Activated CD4-positive, alpha-beta memory T cell treated with anti-CD3 and anti-CD28 coated beads, Interleukin-2, amount 10 ng/mL, durations not matched to agents 7 days and 5 days (primary cell): ENCODE measurements at regions of chr20 and their contacts with region 1.

Region 1: DNA sequence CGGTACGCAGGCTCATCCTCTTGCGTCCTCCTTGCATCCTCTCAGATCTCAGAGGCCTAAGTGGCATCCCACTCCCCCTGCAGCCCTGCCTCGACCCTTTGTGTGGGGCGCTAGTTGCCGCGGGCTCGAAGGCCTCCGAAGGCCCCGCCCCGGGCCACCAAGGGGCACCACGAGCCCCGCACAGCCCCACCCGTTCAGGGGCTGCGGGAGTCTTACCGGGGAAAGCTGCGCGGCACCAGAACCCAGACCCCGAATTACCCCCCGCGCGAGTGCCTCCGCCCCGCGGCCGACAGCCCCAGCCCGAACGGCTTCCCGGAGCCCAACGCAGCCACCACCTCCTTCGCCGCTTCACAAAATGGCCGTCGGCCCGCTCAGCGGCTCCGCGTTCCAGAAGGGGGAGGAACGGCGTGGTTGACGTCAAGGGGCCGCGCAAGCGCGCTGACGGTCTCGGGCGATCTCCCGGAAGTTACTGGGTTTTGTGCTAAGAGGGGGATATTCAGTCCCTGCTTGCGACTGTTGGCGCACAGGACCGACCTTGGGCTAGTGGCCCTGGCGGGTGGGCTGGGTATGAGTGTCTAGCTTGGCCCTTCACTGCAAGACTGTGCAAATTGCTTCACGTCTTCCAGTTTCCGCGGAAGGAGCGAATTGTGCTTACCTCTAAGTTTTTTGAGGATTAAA is at the starts of genes CPNE1 and RBM12:
- DNase-seq: peak; percentile 95
- H3K4me3 Mint-ChIP-seq: peak within 1 kb of the TSS; percentile 95
- H3K27ac Mint-ChIP-seq: peak within 1 kb of the TSS; percentile 98
- H3K4me1 Mint-ChIP-seq: peaks cover 46% of the 10 kb centered on the region
- H3K27me3 Mint-ChIP-seq: no peaks in the 10 kb centered on the region
- total RNA-seq, gene CPNE1: 239 to 243 TPM
- total RNA-seq, gene RBM12: 115 to 116 TPM

Region 2: GRCh38 chr20:35601008-35601973 is 63.4 kb before region 1 on chr20:
- CTCF ChIA-PET with region 1: interaction called, 4 read pairs
- POLR2A ChIA-PET with region 1: interaction called, 11 read pairs
- DNase-seq: peak; percentile 82
- H3K4me3 Mint-ChIP-seq: peak overlapping the region; percentile 60
- H3K27ac Mint-ChIP-seq: no peak overlapping the region
- H3K4me1 Mint-ChIP-seq: peaks cover 8% of the 10 kb centered on the region
- H3K27me3 Mint-ChIP-seq: peaks cover 57% of the 10 kb centered on the region

Region 3: DNA sequence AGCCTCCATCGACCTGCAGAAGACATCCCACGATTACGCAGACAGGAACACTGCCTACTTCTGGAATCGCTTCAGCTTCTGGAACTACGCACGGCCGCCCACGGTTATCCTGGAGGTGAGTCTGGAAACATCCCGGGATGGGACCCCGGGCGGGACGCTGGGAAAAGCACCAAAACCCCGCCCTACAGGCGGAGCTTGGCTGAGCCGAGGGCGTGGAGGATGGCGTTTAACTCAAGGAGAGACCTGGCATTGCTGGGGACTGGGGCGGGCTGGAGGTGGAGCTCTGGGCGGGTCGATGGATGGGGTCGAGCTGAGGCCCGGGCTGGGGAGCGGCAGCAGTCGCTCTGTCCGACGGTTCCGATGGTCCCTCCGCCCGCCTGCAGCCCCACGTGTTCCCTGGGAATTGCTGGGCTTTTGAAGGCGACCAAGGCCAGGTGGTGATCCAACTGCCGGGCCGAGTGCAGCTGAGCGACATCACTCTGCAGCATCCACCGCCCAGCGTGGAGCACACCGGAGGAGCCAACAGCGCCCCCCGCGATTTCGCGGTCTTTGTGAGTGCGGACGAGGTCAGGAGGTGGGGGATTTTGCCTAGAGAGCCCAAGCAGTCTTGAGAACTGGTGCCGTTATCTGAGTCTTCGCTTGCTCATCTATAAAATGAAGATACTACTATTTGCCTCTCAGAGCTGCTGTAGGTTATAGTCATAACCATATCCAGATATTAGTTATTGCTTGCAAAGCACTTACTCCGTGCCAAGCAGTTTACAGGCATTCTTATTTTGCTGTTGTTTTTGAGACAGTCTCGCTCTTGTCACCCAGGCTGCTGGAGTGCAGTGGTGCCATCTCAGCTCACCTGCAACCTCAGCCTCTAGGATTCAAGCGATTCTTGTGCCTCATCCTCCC is 45.2 kb before region 1 on chr20:
- CTCF ChIA-PET with region 1: interaction called, 9 read pairs
- POLR2A ChIA-PET with region 1: interaction called, 198 read pairs
- DNase-seq: peak; percentile 78
- H3K4me3 Mint-ChIP-seq: peak overlapping the region; percentile 83
- H3K27ac Mint-ChIP-seq: peak overlapping the region; percentile 70
- H3K4me1 Mint-ChIP-seq: peaks cover 45% of the 10 kb centered on the region
- H3K27me3 Mint-ChIP-seq: peaks cover 1% of the 10 kb centered on the region

Region 4: GRCh38 chr20:35648836-35649235 is 15.8 kb before region 1 on chr20:
- CTCF ChIA-PET with region 1: interaction called, 3 read pairs
- POLR2A ChIA-PET with region 1: interaction called, 21 read pairs
- DNase-seq: no peak
- H3K4me3 Mint-ChIP-seq: no peak overlapping the region
- H3K27ac Mint-ChIP-seq: no peak overlapping the region
- H3K4me1 Mint-ChIP-seq: peaks cover 38% of the 10 kb centered on the region
- H3K27me3 Mint-ChIP-seq: no peaks in the 10 kb centered on the region

Region 5: GRCh38 chr20:35699127-35699975 is 34.7 kb after region 1 on chr20 and contains the starts of genes NFS1 and ROMO1:
- CTCF ChIA-PET with region 1: interaction called, 3 read pairs
- POLR2A ChIA-PET with region 1: interaction called, 35 read pairs
- DNase-seq: peak; percentile 87
- H3K4me3 Mint-ChIP-seq: peak within 1 kb of the TSS; percentile 91
- H3K27ac Mint-ChIP-seq: peak within 1 kb of the TSS; percentile 77
- H3K4me1 Mint-ChIP-seq: peaks cover 56% of the 10 kb centered on the region
- H3K27me3 Mint-ChIP-seq: no peaks in the 10 kb centered on the region
- total RNA-seq, gene NFS1: 28.3 to 30.8 TPM
- total RNA-seq, gene ROMO1: 98.4 to 114 TPM

Region 6: DNA sequence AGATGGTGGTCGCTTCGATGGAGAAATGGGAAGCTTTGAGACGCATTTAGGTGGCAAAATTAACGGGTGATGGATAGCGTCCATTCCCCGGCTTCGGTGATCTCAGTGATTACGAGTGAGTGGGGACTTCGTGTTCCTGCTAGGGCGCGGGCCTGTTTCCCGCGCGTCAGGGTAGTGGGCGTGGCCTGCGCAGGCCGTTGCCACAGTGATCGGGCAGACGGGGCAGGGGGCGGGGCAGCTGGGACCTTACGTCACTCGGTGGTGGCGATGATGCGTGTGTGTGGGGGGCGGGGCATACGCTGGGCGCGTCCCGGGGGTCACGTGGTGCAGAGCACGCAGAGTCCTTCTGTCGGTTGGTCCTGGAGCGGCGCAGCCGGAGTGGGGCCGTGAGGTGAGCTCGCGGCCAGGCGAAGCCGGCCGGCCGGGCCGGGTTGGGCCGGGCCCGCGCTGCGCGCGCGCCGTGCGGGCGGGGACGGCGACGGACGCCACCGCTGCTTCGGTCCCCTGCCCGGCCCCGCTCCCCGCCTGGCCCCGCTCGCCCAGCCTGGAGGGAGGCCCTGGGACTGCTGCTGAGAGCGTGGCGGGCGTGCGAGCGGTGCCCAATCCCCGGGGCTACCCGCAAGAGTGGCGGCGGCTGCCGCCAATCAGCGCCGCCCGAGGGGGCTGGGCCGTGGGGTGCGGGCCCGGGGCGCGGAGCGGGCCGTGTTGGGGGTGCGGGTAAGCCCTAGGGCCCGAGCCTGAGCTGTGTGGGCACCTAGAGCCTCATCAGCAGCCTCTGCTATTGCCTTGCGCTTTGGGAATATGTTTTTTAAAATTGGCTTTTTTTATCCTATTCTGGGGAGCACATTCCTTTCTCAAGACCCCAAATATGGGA is 107.2 kb after region 1 on chr20 and contains the start of gene PHF20:
- CTCF ChIA-PET with region 1: interaction called, 5 read pairs
- POLR2A ChIA-PET with region 1: interaction called, 16 read pairs
- DNase-seq: peak; percentile 99
- H3K4me3 Mint-ChIP-seq: peak within 1 kb of the TSS; percentile 77
- H3K27ac Mint-ChIP-seq: peak within 1 kb of the TSS; percentile 79
- H3K4me1 Mint-ChIP-seq: peaks cover 65% of the 10 kb centered on the region
- H3K27me3 Mint-ChIP-seq: no peaks in the 10 kb centered on the region
- total RNA-seq, gene PHF20: 42.7 to 48.3 TPM

Region 7: DNA sequence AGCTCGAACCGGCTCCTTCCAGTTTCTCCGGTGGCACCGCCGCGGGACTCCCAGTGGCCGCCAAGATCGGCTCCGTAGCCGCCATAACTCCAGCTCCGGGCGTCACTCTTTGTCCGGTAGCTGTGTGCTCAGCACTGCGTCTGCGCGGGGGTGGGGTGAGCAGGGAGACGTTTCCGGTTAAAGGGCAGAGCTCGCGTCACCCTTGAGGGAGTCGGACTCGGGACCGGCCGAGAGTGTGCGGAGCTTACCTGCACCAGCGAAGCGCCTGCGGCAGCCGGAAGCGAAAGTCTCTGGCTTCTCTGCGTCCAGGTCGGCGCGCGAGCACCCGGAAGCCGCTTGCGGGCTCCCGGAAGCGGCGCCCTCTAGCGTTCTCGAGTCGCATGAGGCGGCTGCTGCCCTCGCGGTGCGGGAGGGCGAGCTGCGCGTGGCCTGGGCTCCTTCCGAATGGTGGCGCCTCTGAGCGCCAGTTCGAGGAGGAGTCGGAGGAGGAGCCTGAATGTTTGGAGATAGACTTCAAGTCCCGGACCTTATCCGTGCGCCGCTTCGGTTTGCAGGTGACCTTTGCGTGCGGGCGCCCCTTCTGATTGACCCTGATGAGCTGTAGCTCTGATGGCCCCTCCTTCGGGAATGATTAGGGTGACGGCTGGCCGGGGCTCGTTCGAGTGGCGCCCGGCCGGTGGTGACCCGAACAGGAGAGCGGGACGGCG is 289.7 kb after region 1 on chr20 and contains the start of gene SCAND1:
- CTCF ChIA-PET with region 1: interaction called, 24 read pairs
- POLR2A ChIA-PET with region 1: interaction called, 40 read pairs
- DNase-seq: peak; percentile 97
- H3K4me3 Mint-ChIP-seq: peak within 1 kb of the TSS; percentile 99
- H3K27ac Mint-ChIP-seq: peak within 1 kb of the TSS; percentile 100
- H3K4me1 Mint-ChIP-seq: peaks cover 25% of the 10 kb centered on the region
- H3K27me3 Mint-ChIP-seq: no peaks in the 10 kb centered on the region
- total RNA-seq, gene SCAND1: 65.5 to 70.0 TPM